CD4-positive, alpha-beta memory T cell (primary cell): ENCODE measurements at regions of chr1 and their contacts with region 1.

Region 1: DNA sequence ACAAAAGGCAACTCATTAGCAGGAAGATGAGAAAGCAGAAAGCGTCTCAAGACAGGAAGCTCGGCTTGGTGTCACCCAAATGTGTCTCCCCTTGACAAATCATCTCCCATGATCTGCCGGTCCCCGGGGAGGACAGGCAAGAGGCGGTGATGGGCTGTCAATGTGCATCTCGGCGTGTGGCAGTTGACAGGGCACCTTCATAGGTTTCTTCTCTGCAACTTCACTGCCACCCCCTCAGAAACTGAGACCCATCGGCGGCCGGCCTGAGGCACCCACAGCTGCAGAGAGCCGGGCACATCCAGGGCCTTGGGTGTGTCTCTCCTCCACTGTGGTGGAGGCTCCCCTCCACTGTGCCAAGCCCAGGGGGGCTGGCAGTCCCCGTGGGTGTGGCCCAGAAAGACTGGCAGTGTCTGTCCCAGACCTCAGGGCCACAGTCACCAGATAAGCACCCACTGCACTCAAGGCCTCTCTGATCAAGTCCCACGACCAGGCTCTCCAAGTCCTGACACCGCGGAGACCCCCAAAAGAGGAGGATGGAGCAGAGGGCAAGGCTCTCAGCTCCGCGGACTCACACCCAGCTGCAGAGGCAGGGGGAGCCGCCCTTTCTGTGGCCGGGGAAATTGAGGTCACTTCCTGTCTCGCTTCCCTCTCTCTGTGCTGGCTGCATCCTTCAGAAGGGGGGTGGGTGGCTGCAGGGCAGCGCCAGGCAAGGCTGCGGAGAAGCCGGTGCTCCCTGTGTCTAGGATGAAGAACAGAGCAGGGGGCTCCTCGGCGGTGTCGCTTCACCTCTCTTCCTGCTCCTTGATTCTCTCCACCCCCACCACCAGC is 39.6 kb upstream of the LBR start:
- DNase-seq: peak; percentile 83 to 89 (median 85)
- H3K4me3 ChIP-seq: peak overlapping the region; percentile 74 to 85
- H3K4me3 Mint-ChIP-seq: peak overlapping the region; percentile 90 to 94 (median 92)
- H3K27ac ChIP-seq: peak overlapping the region; percentile 84
- H3K27ac Mint-ChIP-seq: peak overlapping the region; percentile 92 to 98 (median 97)
- H3K4me1 ChIP-seq: peaks cover 48% of the 10 kb centered on the region
- H3K4me1 Mint-ChIP-seq: peaks cover 27 to 63% (median 45%) of the 10 kb centered on the region in 4 donors
- H3K27me3 ChIP-seq: no peaks in the 10 kb centered on the region
- H3K27me3 Mint-ChIP-seq: no peaks in the 10 kb centered on the region

Region 2: GRCh38 chr1:224542783-224543440 is 924.5 kb before region 1 on chr1:
- CTCF ChIA-PET with region 1: no interaction called
- POLR2A ChIA-PET with region 1: no interaction called
- intact Hi-C with region 1: no loop called
- DNase-seq: peak in 3 of 5 donors; percentile 4 to 64 (median 20)
- H3K4me3 ChIP-seq: no peak overlapping the region
- H3K4me3 Mint-ChIP-seq: peak overlapping the region in 1 of 8 donors; percentile 16
- H3K27ac ChIP-seq: no peak overlapping the region
- H3K27ac Mint-ChIP-seq: peak overlapping the region in 1 of 7 donors; percentile 5
- H3K4me1 ChIP-seq: peaks cover 12% of the 10 kb centered on the region
- H3K4me1 Mint-ChIP-seq: peaks cover 8 to 16% (median 12%) of the 10 kb centered on the region in 4 donors
- H3K27me3 ChIP-seq: no peaks in the 10 kb centered on the region
- H3K27me3 Mint-ChIP-seq: no peaks in the 10 kb centered on the region

Region 3: GRCh38 chr1:225447650-225448089 is 19.7 kb before region 1 on chr1:
- CTCF ChIA-PET with region 1: interaction called, 43 read pairs
- POLR2A ChIA-PET with region 1: interaction called, 209 read pairs
- intact Hi-C with region 1: loop called (anchors 1 kb)
- DNase-seq: no peak
- H3K4me3 ChIP-seq: no peak overlapping the region
- H3K4me3 Mint-ChIP-seq: no peak overlapping the region
- H3K27ac ChIP-seq: no peak overlapping the region
- H3K27ac Mint-ChIP-seq: peak overlapping the region in 1 of 7 donors; percentile 17
- H3K4me1 ChIP-seq: peaks cover 47% of the 10 kb centered on the region
- H3K4me1 Mint-ChIP-seq: peaks cover 29 to 55% (median 43%) of the 10 kb centered on the region in 4 donors
- H3K27me3 ChIP-seq: no peaks in the 10 kb centered on the region
- H3K27me3 Mint-ChIP-seq: no peaks in the 10 kb centered on the region

Region 4: DNA sequence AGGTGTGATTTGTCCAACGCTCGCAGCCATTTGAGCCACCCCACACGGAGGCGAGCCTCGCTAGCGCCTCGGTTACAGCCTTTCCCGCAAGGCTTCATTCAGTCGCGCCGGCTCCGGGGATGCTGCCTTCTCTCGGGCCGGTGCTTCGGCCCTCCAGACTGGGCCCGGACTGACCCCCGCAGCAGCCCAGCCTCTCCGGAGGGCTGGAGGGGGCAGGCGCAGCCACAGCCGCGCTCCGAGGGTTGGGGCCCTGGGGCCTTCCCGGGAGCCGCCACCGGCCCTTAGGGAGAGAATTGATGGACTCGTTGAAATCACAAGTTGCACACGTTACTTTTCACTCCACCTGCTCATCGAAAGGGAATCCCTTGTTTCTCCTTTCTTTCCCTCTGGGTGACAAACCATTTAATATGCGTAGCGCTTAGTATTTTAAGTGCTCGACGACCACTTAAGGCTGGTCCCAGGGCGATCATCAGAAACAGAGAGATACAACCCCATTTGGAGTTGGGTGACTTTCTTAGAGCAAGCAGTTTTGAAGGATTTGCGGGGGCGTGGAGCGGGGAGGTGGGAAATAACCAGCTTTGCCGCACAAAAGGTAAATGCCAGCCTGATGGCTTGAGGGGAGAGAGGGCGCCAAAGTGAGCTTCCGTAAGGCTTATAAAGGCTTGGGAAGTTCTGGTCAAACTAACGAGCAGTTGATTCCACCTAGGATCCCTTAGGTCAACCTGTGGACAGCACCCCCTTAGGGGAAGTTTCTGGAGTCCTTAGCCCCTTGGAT is 210.1 kb after region 1 on chr1:
- CTCF ChIA-PET with region 1: no interaction called
- POLR2A ChIA-PET with region 1: no interaction called
- intact Hi-C with region 1: no loop called
- DNase-seq: no peak
- H3K4me3 ChIP-seq: no peak overlapping the region
- H3K4me3 Mint-ChIP-seq: peak overlapping the region in 2 of 8 donors; percentile 20 to 36
- H3K27ac ChIP-seq: no peak overlapping the region
- H3K27ac Mint-ChIP-seq: no peak overlapping the region
- H3K4me1 ChIP-seq: no peaks in the 10 kb centered on the region
- H3K4me1 Mint-ChIP-seq: peaks cover 0 to 5% (median 1%) of the 10 kb centered on the region in 4 donors
- H3K27me3 ChIP-seq: peaks cover 6% of the 10 kb centered on the region
- H3K27me3 Mint-ChIP-seq: peaks cover 29 to 40% of the 10 kb centered on the region in 2 donors

Region 5: DNA sequence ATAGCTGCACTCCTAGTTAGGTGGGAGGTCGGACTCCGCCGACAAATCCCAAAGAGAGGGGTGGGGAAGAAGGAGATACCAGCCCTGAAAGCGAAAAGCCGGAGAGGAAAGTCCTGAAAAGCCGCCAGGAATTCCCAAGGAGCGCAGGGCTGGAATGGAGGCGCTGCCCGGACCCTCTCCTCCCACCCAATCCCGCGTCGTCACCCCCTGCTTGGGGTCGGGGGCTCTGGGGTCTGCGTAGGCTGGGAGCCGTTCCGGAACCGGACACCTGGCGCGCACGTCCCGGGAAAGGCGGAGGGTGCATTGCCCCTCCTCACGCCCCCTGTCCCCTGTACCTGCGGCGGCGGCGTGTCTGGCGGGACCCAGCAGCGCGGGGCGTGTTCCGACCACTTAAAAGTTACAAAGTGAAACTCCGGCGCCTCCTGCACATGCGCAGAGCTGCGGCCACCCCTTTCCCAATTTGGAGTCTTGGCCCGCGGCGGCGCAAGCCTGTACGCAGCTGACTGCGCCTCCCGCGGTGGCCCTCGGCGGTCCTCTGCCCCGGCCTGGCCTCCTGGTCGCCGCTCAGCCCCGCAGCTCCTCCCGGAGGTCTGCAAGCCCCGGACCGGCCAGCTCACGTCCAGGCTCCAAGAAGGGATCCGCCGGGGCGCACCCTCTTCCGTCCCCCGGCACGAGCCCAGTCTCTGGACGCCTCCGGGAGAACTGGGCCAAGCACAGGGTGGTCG is 414.7 kb after region 1 on chr1 and contains the start of gene TMEM63A:
- CTCF ChIA-PET with region 1: no interaction called
- POLR2A ChIA-PET with region 1: interaction called, 22 read pairs
- intact Hi-C with region 1: no loop called
- DNase-seq: peak; percentile 86 to 92 (median 88)
- H3K4me3 ChIP-seq: peak within 1 kb of the TSS; percentile 89 to 98
- H3K4me3 Mint-ChIP-seq: peak within 1 kb of the TSS; percentile 95 to 99 (median 98)
- H3K27ac ChIP-seq: peak within 1 kb of the TSS; percentile 84
- H3K27ac Mint-ChIP-seq: peak within 1 kb of the TSS; percentile 93 to 97 (median 96)
- H3K4me1 ChIP-seq: peaks cover 48% of the 10 kb centered on the region
- H3K4me1 Mint-ChIP-seq: peaks cover 37 to 57% (median 46%) of the 10 kb centered on the region in 4 donors
- H3K27me3 ChIP-seq: no peaks in the 10 kb centered on the region
- H3K27me3 Mint-ChIP-seq: no peaks in the 10 kb centered on the region
- total RNA-seq, gene TMEM63A: 476 to 507 TPM

Region 6: DNA sequence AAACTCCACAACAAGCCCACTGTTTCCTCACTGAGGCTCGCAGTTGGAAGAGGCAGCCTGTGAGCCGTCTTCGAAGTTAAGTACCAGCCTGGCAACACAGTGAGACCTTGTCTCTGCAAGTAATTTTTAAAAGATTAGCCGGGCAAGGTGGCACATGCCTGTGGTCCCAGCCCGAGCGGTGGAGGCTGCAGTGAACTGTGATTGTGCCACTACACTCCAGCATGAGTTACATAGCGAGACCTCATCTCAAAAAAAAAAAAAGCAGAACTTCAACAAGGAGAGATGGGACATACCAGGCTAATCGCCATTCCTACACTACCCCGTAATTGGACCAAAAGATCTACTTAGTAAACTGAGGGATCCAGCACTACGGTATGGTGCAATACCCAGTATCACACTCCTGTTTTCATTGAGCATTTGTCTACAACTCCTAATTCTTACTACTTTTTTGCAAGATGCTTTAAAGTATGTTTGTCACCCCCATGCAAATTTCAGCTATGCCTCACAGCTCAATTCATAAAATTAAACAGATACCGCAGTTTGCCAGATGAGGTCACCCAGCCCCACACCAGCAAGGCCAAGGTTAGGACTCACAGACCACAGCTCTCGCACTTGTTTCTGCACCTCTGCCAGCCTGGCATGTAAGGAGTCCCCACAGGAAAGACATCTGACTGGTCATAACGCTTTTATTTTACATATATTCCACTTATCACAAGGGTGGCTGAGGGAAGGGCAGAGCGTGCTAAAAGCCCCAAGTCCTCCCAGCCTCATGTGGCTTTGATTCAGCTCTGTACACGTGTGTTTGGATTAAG is 510.7 kb after region 1 on chr1:
- CTCF ChIA-PET with region 1: interaction called, 10 read pairs
- POLR2A ChIA-PET with region 1: no interaction called
- intact Hi-C with region 1: no loop called
- DNase-seq: no peak
- H3K4me3 ChIP-seq: no peak overlapping the region
- H3K4me3 Mint-ChIP-seq: no peak overlapping the region
- H3K27ac ChIP-seq: no peak overlapping the region
- H3K27ac Mint-ChIP-seq: peak overlapping the region in 1 of 7 donors; percentile 43
- H3K4me1 ChIP-seq: no peaks in the 10 kb centered on the region
- H3K4me1 Mint-ChIP-seq: peaks cover 0 to 6% (median 5%) of the 10 kb centered on the region in 4 donors
- H3K27me3 ChIP-seq: no peaks in the 10 kb centered on the region
- H3K27me3 Mint-ChIP-seq: no peaks in the 10 kb centered on the region

Region 7: DNA sequence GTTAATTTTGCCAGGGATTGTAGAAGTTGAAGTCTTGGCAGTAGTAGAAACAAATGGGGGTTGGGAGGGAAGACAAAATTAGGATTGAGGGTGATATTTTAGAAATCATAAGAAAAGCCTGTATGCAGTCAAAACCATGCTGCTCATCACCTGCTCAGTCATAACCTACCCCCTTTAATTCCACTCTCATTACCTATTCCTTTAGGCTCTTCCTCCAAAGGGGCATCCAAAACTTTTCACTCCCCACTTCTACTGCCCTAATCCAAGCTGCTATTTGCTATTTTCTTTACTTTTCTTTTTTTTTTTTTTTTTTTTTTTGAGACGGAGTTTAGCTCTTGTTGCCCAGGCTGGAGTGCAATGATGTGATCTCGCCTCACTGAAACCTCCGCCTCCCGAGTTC is 606.6 kb after region 1 on chr1:
- CTCF ChIA-PET with region 1: no interaction called
- POLR2A ChIA-PET with region 1: no interaction called
- intact Hi-C with region 1: loop called (anchors 5 kb)
- DNase-seq: no peak
- H3K4me3 ChIP-seq: no peak overlapping the region
- H3K4me3 Mint-ChIP-seq: no peak overlapping the region
- H3K27ac ChIP-seq: no peak overlapping the region
- H3K27ac Mint-ChIP-seq: peak overlapping the region in 4 of 7 donors; percentile 5 to 20 (median 14)
- H3K4me1 ChIP-seq: peaks cover 16% of the 10 kb centered on the region
- H3K4me1 Mint-ChIP-seq: peaks cover 7 to 25% (median 18%) of the 10 kb centered on the region in 4 donors
- H3K27me3 ChIP-seq: no peaks in the 10 kb centered on the region
- H3K27me3 Mint-ChIP-seq: no peaks in the 10 kb centered on the region